AG04450 (cell line): ENCODE measurements at regions of chr17 and their contacts with region 1.

Region 1: DNA sequence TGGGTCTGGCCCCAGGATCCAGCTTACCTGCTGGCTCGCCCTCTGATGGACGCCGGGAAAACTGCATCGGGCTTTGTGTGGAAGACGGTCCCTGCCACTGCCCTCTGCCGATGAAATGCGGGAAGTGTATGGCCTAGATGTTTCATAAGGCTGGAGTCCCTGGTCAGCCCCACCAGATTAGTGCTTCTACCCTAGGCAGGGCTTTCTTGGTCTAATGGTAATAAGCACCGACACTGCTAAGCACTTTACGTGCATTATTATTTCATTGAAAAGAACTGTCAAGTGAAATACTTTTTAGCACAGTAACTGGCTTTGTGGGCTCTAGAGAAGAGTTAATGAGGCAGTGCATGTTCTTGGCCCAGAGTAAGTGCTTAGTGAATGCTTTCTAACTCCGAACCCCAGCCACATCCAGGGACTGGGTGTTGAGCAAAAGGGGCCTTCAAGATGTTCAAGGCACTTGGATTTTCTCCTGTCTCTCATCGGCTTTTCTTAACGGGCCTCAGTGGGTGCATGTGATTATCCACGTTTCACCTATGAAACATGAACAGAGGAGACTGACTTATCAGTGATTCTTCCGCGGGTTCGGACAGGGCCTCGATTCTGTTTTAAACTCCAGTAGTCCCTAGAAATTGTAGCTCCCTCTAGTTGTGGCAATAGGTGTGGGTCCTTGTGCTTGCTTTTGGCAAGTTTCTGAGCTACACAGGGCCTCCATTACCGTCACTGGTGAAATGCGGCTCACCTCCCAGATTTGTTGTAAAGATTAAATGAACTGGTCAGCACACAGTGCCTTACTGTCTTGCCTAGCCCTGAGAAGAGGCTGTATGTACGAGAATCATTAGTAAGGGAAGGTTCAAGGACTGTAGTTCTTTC is 6.6 kb downstream of the TRAF4 start:
- DNase-seq: peak; percentile 88
- H3K4me3 ChIP-seq: no peak overlapping the region
- H3K27ac ChIP-seq: peak overlapping the region; percentile 11
- H3K27me3 ChIP-seq: no peaks in the 10 kb centered on the region
- CTCF ChIP-seq: peak; percentile 100

Region 2: GRCh38 chr17:28777178-28777577 is 26.8 kb after region 1 on chr17:
- CTCF ChIA-PET with region 1: interaction called, 18 read pairs
- POLR2A ChIA-PET with region 1: no interaction called
- DNase-seq: no peak
- H3K4me3 ChIP-seq: no peak overlapping the region
- H3K27ac ChIP-seq: no peak overlapping the region
- H3K27me3 ChIP-seq: no peaks in the 10 kb centered on the region
- CTCF ChIP-seq: no peak

Region 3: GRCh38 chr17:28854457-28855350 is 104.3 kb after region 1 on chr17 and contains the start of gene ERAL1:
- CTCF ChIA-PET with region 1: no interaction called
- POLR2A ChIA-PET with region 1: no interaction called
- DNase-seq: peak; percentile 75
- H3K4me3 ChIP-seq: peak within 1 kb of the TSS; percentile 92
- H3K27ac ChIP-seq: peak within 1 kb of the TSS; percentile 52
- H3K27me3 ChIP-seq: no peaks in the 10 kb centered on the region
- CTCF ChIP-seq: peak; percentile 18; the same call in 1 of the 2 replicates
- polyA plus RNA-seq, gene ERAL1: 45.7 and 54.4 TPM in 2 replicates